ENCODE measurements at regions of chr15 and their contacts with region 1.

Region 1: GRCh38 chr15:71743861-71744382 is 66.4 kb upstream of the NR2E3 start:
- DNase-seq: peak; percentile 69
- H3K4me3 ChIP-seq: no peak overlapping the region
- H3K27ac ChIP-seq: no peak overlapping the region
- H3K4me1 ChIP-seq: peaks cover 0 to 9% of the 10 kb centered on the region in 2 experiments; a peak in 1 of 4 replicates
- H3K27me3 ChIP-seq: no peaks in the 10 kb centered on the region
- CTCF ChIP-seq: peak; percentile 86
- EP300 ChIP-seq: no peak
- RAD21 ChIP-seq: peak; percentile 71

Region 2: GRCh38 chr15:71575474-71576045 is 168.4 kb before region 1 on chr15:
- CTCF ChIA-PET with region 1: interaction called, 22 read pairs
- POLR2A ChIA-PET with region 1: no interaction called
- DNase-seq: peak; percentile 36
- H3K4me3 ChIP-seq: no peak overlapping the region
- H3K27ac ChIP-seq: no peak overlapping the region
- H3K4me1 ChIP-seq: no peaks in the 10 kb centered on the region
- H3K27me3 ChIP-seq: no peaks in the 10 kb centered on the region
- CTCF ChIP-seq: peak; percentile 65
- EP300 ChIP-seq: no peak
- RAD21 ChIP-seq: peak; percentile 81

Region 3: DNA sequence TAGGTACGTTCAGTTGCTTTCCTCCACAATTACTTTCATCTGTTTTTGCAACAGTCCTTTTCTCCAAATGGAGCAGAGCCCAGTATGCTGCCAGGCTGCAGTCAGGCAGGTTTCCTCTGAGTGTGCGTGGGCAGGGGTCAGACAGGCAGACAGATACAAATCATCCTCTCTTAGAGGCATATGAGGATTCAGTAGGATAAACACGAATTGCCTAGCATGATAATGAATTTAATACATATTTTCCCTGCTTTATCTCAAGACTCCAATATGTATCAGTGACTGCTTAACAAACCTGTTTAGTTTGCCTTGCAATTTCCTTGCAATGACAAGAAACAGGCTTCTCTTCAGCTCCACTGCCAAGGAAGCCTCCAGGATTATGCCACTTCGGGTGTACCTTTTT is 74.2 kb before region 1 on chr15:
- CTCF ChIA-PET with region 1: no interaction called
- POLR2A ChIA-PET with region 1: no interaction called
- DNase-seq: peak; percentile 30
- H3K4me3 ChIP-seq: no peak overlapping the region
- H3K27ac ChIP-seq: peak overlapping the region; percentile 32 to 67; a peak in 2 of 4 replicates
- H3K4me1 ChIP-seq: peaks cover 0 to 3% of the 10 kb centered on the region in 2 experiments; a peak in 2 of 4 replicates
- H3K27me3 ChIP-seq: no peaks in the 10 kb centered on the region
- CTCF ChIP-seq: no peak
- EP300 ChIP-seq: peak in 1 of 2 experiments; percentile 43; a peak in 1 of 4 replicates
- RAD21 ChIP-seq: no peak

Region 4: DNA sequence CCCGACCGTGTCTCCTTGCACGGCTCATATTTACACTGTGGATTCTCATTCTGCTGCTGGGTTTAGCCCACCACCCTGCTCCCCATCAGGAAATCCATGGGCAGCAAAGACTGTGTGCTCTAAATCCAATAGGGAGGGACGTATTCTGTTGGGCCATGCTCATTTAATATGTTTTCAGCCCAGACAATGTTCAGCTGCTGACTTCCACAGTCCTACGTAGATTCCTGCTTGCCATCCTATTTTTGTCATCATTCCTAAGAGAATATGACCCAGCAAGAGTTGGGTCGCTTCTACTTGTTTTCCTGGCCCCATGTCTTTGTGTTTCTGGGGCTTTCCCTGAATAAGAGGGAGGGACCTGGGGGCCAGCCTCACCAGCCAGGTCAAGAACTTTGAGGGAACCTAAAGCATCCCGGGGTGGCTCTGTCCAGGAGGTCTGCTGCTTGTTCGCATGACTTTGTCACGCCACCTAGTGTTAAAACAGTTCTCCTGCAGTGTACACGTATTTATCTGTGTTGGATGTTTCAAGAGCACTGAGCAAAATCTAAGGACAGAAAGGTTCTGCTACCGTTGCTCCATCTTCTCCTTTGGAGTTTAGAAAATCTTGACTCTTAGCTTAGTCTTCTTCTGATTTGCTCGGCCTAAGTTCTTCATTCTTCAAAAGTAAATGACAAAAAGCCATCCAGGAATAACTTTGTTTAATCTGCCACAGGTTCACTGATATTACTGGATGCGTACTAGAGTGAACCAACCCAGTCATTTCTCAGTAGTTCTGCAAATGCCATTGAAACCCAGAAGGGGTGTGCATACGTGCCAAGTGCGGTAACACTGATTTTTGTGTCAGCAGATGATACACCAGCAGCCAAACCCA is 13.4 kb before region 1 on chr15:
- CTCF ChIA-PET with region 1: interaction called, 18 read pairs
- POLR2A ChIA-PET with region 1: no interaction called
- DNase-seq: peak; percentile 71
- H3K4me3 ChIP-seq: no peak overlapping the region
- H3K27ac ChIP-seq: no peak overlapping the region
- H3K4me1 ChIP-seq: peaks cover 0 to 5% of the 10 kb centered on the region in 2 experiments; a peak in 3 of 4 replicates
- H3K27me3 ChIP-seq: no peaks in the 10 kb centered on the region
- CTCF ChIP-seq: peak; percentile 86
- EP300 ChIP-seq: no peak
- RAD21 ChIP-seq: peak; percentile 88

Region 5: GRCh38 chr15:71757741-71758520 is 14.0 kb after region 1 on chr15:
- CTCF ChIA-PET with region 1: interaction called, 39 read pairs
- POLR2A ChIA-PET with region 1: no interaction called
- DNase-seq: no peak
- H3K4me3 ChIP-seq: no peak overlapping the region
- H3K27ac ChIP-seq: no peak overlapping the region
- H3K4me1 ChIP-seq: peaks cover 0 to 9% of the 10 kb centered on the region in 2 experiments; a peak in 2 of 4 replicates
- H3K27me3 ChIP-seq: no peaks in the 10 kb centered on the region
- CTCF ChIP-seq: no peak
- EP300 ChIP-seq: no peak
- RAD21 ChIP-seq: no peak

Region 6: DNA sequence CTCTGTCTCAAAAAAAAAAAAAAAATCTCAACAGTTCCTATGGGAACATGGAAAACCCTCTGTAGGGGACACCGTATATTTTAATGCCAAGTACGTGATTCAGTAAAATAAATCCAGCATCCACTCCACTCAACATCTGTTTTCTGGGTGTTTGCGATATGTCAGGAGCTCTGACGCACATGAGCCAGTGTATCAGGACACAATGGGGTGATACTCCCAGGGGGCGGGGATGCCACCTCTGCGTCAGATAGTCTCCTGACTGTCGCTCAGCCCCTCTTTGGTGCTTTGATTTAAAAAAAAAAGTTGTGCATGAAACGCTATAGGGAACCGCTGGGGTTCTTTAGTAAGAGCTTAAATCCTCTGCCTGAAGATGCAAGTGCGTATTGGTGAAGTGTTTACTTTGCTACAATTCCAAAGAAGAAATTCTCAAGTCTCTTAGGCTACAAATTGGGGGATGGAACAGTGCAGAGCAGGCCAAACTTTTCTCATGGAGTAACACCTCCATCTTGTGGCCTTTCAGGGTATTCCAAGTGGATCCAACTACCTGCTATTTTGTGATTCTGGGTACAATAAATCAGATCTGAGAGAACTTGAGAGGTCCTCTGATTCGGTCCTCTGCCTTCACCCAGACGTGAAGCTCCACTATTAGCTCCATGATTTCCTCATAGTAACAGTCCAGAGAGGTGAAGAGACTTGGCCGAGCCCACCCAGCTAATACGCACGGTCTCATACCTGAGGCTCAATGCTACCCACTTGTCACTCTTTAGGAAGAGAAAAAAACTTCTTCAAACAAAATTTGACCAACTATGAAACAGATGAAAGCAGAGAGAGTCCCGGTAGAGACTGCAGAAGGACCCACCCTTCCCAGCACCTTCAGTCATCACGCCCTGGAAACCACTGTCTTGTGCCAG is 57.2 kb after region 1 on chr15:
- CTCF ChIA-PET with region 1: interaction called, 57 read pairs
- POLR2A ChIA-PET with region 1: no interaction called
- DNase-seq: peak; percentile 72
- H3K4me3 ChIP-seq: no peak overlapping the region; a peak in 1 of 4 replicates
- H3K27ac ChIP-seq: no peak overlapping the region
- H3K4me1 ChIP-seq: peaks cover under 1 to 6% of the 10 kb centered on the region in 2 experiments; a peak in 2 of 4 replicates
- H3K27me3 ChIP-seq: no peaks in the 10 kb centered on the region
- CTCF ChIP-seq: peak; percentile 88
- EP300 ChIP-seq: no peak
- RAD21 ChIP-seq: peak; percentile 95

Region 7: GRCh38 chr15:71806452-71806931 is 62.6 kb after region 1 on chr15:
- CTCF ChIA-PET with region 1: interaction called, 57 read pairs
- POLR2A ChIA-PET with region 1: no interaction called
- DNase-seq: peak; percentile 73
- H3K4me3 ChIP-seq: no peak overlapping the region
- H3K27ac ChIP-seq: no peak overlapping the region
- H3K4me1 ChIP-seq: peaks cover 21 to 24% of the 10 kb centered on the region in 2 experiments; a peak in 3 of 4 replicates
- H3K27me3 ChIP-seq: no peaks in the 10 kb centered on the region
- CTCF ChIP-seq: no peak
- EP300 ChIP-seq: peak; percentile 21 to 44; a peak in 2 of 4 replicates
- RAD21 ChIP-seq: no peak

Region 8: GRCh38 chr15:71826196-71826595 is 82.3 kb after region 1 on chr15:
- CTCF ChIA-PET with region 1: no interaction called
- POLR2A ChIA-PET with region 1: no interaction called
- DNase-seq: no peak
- H3K4me3 ChIP-seq: no peak overlapping the region
- H3K27ac ChIP-seq: no peak overlapping the region
- H3K4me1 ChIP-seq: no peaks in the 10 kb centered on the region
- H3K27me3 ChIP-seq: no peaks in the 10 kb centered on the region
- CTCF ChIP-seq: no peak
- EP300 ChIP-seq: no peak
- RAD21 ChIP-seq: no peak

Region 9: GRCh38 chr15:72161361-72162260 is 417.7 kb after region 1 on chr15:
- CTCF ChIA-PET with region 1: interaction called, 59 read pairs
- POLR2A ChIA-PET with region 1: no interaction called
- DNase-seq: no peak
- H3K4me3 ChIP-seq: no peak overlapping the region
- H3K27ac ChIP-seq: no peak overlapping the region
- H3K4me1 ChIP-seq: no peaks in the 10 kb centered on the region
- H3K27me3 ChIP-seq: no peaks in the 10 kb centered on the region
- CTCF ChIP-seq: no peak
- EP300 ChIP-seq: no peak
- RAD21 ChIP-seq: no peak